T-cell (primary cell): ENCODE measurements at regions of chr10 and their contacts with region 1.

Region 1: DNA sequence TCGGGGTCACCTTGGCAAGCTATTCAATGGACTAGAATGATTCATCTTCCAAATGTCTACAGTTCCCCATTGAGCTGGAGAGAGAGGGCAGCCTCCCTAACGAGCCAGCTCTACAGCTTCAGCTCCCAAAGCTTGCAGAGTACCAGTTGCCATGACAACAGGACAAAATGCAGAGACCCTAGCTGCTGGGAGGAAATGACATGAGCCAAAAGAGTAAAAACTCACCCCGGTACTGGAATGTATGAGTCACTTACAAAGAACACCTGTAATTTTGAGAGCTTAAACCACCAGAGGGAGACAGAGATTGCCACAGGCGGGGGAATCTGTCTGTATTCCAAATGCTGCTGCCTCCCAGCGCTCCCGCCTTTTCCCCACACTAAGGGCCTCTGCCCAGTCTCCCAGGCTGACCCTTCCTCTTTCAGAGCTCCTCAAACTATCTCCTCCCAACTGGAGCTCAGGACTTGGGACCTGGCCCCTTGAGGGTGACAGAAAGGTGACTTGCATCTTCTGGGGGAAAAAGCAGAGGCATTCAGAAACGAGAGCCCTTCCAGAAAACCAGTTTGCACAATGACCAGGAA is 95.5 kb downstream of the CUL2 start:
- DNase-seq: peak in 20 of 35 experiments; percentile 2 to 58 (median 15)
- ATAC-seq: peak; percentile 70 to 82 (median 72)
- H3K4me3 ChIP-seq: no peak overlapping the region
- H3K4me3 Mint-ChIP-seq: no peak overlapping the region
- H3K27ac ChIP-seq: no peak overlapping the region
- H3K27ac Mint-ChIP-seq: peak overlapping the region; percentile 19 to 55
- H3K4me1 ChIP-seq: peaks cover 0 to 9% of the 10 kb centered on the region in 2 experiments
- H3K4me1 Mint-ChIP-seq: peaks cover 7 to 13% (median 12%) of the 10 kb centered on the region in 3 donors
- H3K27me3 ChIP-seq: no peaks in the 10 kb centered on the region
- H3K27me3 Mint-ChIP-seq: no peaks in the 10 kb centered on the region

Region 2: GRCh38 chr10:35019041-35020024 is 24.7 kb after region 1 on chr10:
- CTCF ChIA-PET with region 1: interaction called, 3 to 11 read pairs
- POLR2A ChIA-PET with region 1: no interaction called
- DNase-seq: no peak
- ATAC-seq: no peak
- H3K4me3 ChIP-seq: no peak overlapping the region
- H3K4me3 Mint-ChIP-seq: no peak overlapping the region
- H3K27ac ChIP-seq: no peak overlapping the region
- H3K27ac Mint-ChIP-seq: peak overlapping the region; percentile 12 to 66
- H3K4me1 ChIP-seq: no peaks in the 10 kb centered on the region
- H3K4me1 Mint-ChIP-seq: peaks cover 0 to 10% (median 8%) of the 10 kb centered on the region in 3 donors
- H3K27me3 ChIP-seq: no peaks in the 10 kb centered on the region
- H3K27me3 Mint-ChIP-seq: no peaks in the 10 kb centered on the region